ENCODE measurements at regions of chrX and their contacts with region 1.

Region 1: GRCh38 chrX:16123222-16123786 is at the start of gene GRPR:
- DNase-seq: peak; percentile 63
- H3K4me3 ChIP-seq: peak within 1 kb of the TSS in 1 of 2 experiments; percentile 7; a peak in 1 of 4 replicates
- H3K27ac ChIP-seq: no peak within 1 kb of the TSS
- H3K4me1 ChIP-seq: peaks cover 0 to 2% of the 10 kb centered on the region in 2 experiments; a peak in 2 of 4 replicates
- H3K27me3 ChIP-seq: no peaks in the 10 kb centered on the region
- CTCF ChIP-seq: peak; percentile 96
- EP300 ChIP-seq: no peak
- RAD21 ChIP-seq: peak; percentile 83
- polyA plus RNA-seq, gene GRPR: 1.2 and 2.8 TPM in 2 replicates

Region 2: DNA sequence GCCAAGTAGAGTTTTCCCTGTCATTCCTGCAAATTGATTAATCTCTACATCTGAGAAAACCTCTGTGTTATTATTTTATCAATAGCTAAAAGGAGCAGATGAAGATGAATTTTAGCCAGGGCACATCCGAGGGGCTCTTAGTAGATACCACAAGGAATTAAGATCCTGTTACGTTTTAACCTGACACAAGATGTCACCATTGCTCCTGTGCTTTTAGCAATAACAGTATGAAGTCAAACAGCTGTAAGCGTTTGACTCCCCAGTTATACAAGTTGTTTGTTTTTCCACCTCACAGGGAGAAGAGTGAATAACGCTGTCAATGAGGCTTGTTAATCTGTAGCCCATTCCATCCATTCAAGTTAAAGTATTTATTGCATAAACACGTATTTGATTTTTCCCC is 192.7 kb before region 1 on chrX:
- CTCF ChIA-PET with region 1: interaction called, 10 read pairs
- POLR2A ChIA-PET with region 1: no interaction called
- DNase-seq: peak; percentile 24
- H3K4me3 ChIP-seq: no peak overlapping the region
- H3K27ac ChIP-seq: no peak overlapping the region
- H3K4me1 ChIP-seq: no peaks in the 10 kb centered on the region
- H3K27me3 ChIP-seq: no peaks in the 10 kb centered on the region; the same call in 1 of the 2 replicates
- CTCF ChIP-seq: peak; percentile 59
- EP300 ChIP-seq: no peak
- RAD21 ChIP-seq: peak; percentile 72

Region 3: GRCh38 chrX:15947648-15948317 is 175.5 kb before region 1 on chrX:
- CTCF ChIA-PET with region 1: no interaction called
- POLR2A ChIA-PET with region 1: no interaction called
- DNase-seq: no peak
- H3K4me3 ChIP-seq: no peak overlapping the region
- H3K27ac ChIP-seq: peak overlapping the region in 1 of 2 experiments; percentile 65; a peak in 2 of 4 replicates
- H3K4me1 ChIP-seq: peaks cover 0 to 4% of the 10 kb centered on the region in 2 experiments; a peak in 1 of 4 replicates
- H3K27me3 ChIP-seq: no peaks in the 10 kb centered on the region
- CTCF ChIP-seq: no peak
- EP300 ChIP-seq: no peak
- RAD21 ChIP-seq: no peak

Region 4: DNA sequence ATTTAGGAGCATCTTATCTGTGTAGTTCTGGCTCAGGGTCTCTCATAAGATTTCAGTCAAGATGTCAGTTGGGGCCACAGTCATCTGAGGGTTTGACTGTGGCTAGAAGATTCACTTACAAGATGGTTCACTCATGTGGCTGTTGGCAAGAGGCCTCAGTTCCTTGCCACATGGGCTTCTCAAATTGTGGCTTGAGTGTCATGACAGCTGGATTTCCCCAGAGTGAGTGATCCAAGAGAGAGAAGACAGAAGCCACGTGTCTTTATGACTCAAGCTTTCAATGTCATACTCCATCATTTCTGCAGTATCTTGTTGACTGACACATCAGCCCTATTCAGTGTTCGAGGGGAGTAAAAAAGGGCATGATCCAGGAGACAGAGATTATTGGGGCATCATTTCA is 137.4 kb before region 1 on chrX:
- CTCF ChIA-PET with region 1: no interaction called
- POLR2A ChIA-PET with region 1: no interaction called
- DNase-seq: no peak
- H3K4me3 ChIP-seq: no peak overlapping the region
- H3K27ac ChIP-seq: no peak overlapping the region
- H3K4me1 ChIP-seq: 0 out of 4 replicates have a peak, but pooled peaks cover 0 to 4% of the 10 kb centered on the region in 2 experiments
- H3K27me3 ChIP-seq: no peaks in the 10 kb centered on the region
- CTCF ChIP-seq: no peak
- EP300 ChIP-seq: no peak
- RAD21 ChIP-seq: no peak

Region 5: GRCh38 chrX:16023790-16024734 is 99.2 kb before region 1 on chrX:
- CTCF ChIA-PET with region 1: no interaction called
- POLR2A ChIA-PET with region 1: no interaction called
- DNase-seq: no peak
- H3K4me3 ChIP-seq: no peak overlapping the region
- H3K27ac ChIP-seq: peak overlapping the region in 1 of 2 experiments; percentile 87; a peak in 2 of 4 replicates
- H3K4me1 ChIP-seq: peaks cover 0 to 26% of the 10 kb centered on the region in 2 experiments; a peak in 2 of 4 replicates
- H3K27me3 ChIP-seq: no peaks in the 10 kb centered on the region
- CTCF ChIP-seq: no peak
- EP300 ChIP-seq: no peak; a peak in 1 of 4 replicates
- RAD21 ChIP-seq: no peak

Region 6: GRCh38 chrX:16112428-16112827 is 10.9 kb before region 1 on chrX:
- CTCF ChIA-PET with region 1: interaction called, 11 read pairs
- POLR2A ChIA-PET with region 1: no interaction called
- DNase-seq: no peak
- H3K4me3 ChIP-seq: no peak overlapping the region
- H3K27ac ChIP-seq: no peak overlapping the region
- H3K4me1 ChIP-seq: no peaks in the 10 kb centered on the region
- H3K27me3 ChIP-seq: no peaks in the 10 kb centered on the region; the same call in 1 of the 2 replicates
- CTCF ChIP-seq: peak; percentile 43
- EP300 ChIP-seq: no peak
- RAD21 ChIP-seq: 0 out of 2 replicates have a peak, but pooled peaks have one; percentile 9

Region 7: DNA sequence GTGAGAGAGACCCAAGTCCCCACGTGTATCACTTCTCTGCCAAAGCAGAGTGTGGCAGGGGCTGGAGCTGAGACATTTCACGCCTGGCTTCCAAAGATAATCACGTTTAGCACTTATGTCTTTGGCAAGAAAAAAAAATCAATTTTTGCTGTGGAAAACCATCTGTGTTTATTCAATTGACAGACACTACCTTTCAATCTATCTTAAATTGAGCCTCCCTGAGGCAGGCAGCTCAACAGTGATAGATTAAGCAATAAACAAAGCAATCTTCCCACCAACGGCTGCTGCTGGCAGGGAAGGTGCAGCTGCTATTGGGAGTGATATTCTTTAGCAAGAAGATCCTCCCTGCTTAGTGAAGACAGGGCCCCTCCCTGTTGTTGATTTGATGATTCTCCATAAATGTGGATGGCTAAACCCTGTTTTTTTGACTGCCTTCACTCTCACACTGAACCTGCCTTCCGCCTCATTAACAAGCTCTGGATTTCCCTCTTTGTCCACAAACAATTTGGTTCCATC is 32.3 kb after region 1 on chrX:
- CTCF ChIA-PET with region 1: interaction called, 10 read pairs
- POLR2A ChIA-PET with region 1: no interaction called
- DNase-seq: no peak
- H3K4me3 ChIP-seq: no peak overlapping the region
- H3K27ac ChIP-seq: no peak overlapping the region
- H3K4me1 ChIP-seq: no peaks in the 10 kb centered on the region
- H3K27me3 ChIP-seq: no peaks in the 10 kb centered on the region
- CTCF ChIP-seq: no peak
- EP300 ChIP-seq: no peak
- RAD21 ChIP-seq: no peak

Region 8: DNA sequence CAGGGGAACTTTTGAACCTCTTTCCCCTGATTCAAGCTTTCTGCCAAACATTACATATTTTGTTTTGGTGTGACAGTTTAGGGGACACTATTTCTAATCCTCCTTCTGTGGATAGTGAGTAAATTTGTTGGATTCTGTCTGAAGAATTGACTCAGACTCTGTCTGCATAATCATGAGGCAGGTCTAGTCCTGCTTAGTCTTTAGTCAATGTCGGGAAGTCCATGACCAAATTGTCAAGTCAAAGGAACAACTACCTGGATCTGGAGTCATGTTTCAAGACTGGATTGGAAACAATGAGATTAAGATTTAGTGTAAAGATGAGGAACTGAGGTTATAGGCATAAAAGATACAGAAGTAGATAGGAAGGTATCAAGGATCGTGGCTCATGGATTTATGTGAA is 144.9 kb after region 1 on chrX:
- CTCF ChIA-PET with region 1: no interaction called
- POLR2A ChIA-PET with region 1: no interaction called
- DNase-seq: no peak
- H3K4me3 ChIP-seq: no peak overlapping the region
- H3K27ac ChIP-seq: no peak overlapping the region
- H3K4me1 ChIP-seq: no peaks in the 10 kb centered on the region
- H3K27me3 ChIP-seq: no peaks in the 10 kb centered on the region
- CTCF ChIP-seq: no peak
- EP300 ChIP-seq: no peak
- RAD21 ChIP-seq: no peak